Left colon (tissue), 2 donors: ENCODE measurements at regions of chr19 and their contacts with region 1.

Region 1: DNA sequence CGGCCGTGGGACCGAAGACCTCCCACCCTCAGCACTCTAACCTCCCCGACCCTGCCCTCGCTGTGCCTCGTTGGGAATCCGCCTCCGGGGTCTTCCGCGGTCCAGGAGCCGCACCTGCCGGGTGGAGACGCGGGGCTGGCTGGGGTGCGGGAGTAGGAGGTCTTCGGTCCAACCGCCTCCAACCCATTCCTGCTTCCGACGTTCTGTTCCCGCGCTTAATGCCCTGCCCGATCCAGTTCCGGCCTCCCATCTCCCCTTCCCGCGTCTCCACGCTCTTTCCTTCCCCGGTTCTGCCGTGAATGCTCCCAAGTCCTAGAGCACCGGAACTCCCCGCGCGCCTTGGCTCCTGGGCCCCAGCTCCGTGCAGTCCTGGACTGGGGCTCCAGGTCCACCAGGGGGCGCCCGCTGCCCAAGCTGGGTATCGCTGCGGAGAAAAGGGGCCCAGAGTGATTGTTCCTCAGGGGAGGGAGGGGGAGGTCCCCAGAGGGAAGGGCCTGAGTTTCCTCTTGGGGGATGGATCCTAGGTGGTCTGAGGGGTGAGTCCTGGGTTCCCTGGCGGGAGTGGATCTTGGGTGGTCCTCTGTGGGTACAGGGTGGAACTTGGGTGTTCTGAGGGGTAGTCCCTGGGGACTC is 14.1 kb upstream of the TNFSF9 start:
- DNase-seq: peak; percentile 85 to 97
- ATAC-seq: peak; percentile 82

Region 2: GRCh38 chr19:6476155-6476895 is 40.5 kb before region 1 on chr19:
- intact Hi-C with region 1: no loop called
- DNase-seq: peak; percentile 93 to 95
- ATAC-seq: peak; percentile 93

Region 3: DNA sequence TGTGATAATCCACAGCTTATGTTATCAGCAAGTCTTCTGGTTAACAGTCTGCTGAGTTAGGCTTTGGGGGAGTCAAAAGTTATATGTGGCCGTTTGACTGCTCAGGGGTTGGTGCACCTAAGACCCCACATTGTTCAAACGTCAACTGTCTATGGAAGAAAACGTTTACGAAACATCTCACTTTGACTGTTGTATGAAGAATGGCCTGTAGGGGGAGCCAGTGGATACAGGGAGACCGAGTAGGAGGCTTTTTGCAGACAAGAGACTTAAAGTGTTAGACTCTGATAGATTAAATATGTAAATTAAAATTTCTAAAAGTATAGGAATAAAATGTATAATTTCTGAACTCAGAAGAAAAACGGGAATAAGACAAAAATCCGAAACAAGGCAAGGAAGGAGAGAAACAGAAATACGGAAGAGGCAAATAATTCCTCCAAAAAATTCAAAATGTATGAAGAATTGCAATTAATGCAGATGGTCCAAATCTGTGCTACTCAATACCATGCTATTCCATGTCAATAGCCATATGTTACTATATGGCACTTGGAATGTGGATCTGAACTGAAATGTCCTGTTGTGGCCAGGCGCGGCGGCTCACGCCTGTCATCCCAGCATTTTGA is 115.3 kb after region 1 on chr19:
- intact Hi-C with region 1: loop called in 1 of 2 experiments (anchors 5 kb)
- DNase-seq: peak; percentile 56 to 76
- ATAC-seq: peak; percentile 76

Region 4: DNA sequence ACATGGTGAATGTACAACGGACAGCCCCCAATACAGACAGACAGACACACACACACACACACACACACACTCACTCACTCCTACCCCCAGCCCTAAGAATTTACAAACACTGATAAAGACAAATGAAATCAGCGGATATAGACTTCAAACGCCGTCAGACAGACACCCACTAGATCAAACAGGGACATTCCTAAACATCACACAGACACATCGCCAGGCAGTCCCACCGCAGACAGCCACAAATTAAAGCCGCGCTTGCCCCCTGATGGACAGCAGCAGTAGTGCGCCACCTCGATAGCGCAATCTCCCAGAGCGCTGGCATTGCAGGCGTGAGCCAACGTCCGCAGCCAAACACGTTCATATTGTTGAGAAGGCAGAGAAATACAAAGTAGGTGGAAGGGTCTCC is 345.9 kb after region 1 on chr19:
- intact Hi-C with region 1: loop called in 1 of 2 experiments (anchors 2 kb)
- DNase-seq: peak; percentile 74 to 82
- ATAC-seq: peak; percentile 78